BJ (cell line): ENCODE measurements at regions of chr6 and their contacts with region 1.

Region 1: DNA sequence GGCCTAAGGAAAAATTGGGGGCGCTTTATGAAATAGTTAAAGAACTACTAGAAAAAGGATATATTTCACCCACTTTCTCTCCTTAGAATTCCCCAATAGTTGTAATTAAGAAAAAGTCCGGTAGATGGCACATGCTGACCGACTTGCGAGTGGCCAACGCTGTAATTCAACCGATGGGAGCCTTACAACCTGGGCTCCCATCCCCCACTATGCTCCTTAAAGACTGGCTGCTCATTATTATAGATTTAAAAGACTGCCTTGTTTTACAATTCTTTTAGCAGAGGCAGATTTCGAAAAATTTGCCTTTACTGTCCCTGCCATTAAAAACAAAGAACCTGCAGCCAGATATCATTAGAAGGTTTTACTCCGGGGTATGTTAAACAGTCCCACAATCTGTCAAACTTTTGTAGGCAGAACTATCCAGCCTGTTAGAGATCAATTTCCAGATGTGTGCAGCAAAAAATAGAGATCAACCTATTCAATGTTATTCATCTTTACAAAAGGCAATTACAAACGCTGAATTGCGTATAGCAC is 58.5 kb upstream of the PRSS16 start:
- DNase-seq: peak; percentile 31
- H3K4me3 ChIP-seq: peak overlapping the region; percentile 56
- H3K27me3 ChIP-seq: no peaks in the 10 kb centered on the region
- CTCF ChIP-seq: peak; percentile 61

Region 2: GRCh38 chr6:27177485-27178406 is 11.2 kb before region 1 on chr6:
- CTCF ChIA-PET with region 1: interaction called, 10 read pairs
- POLR2A ChIA-PET with region 1: interaction called, 3 read pairs
- DNase-seq: peak; percentile 71
- H3K4me3 ChIP-seq: peak overlapping the region; percentile 71
- H3K27me3 ChIP-seq: no peaks in the 10 kb centered on the region
- CTCF ChIP-seq: peak; percentile 57

Region 3: GRCh38 chr6:28005124-28005890 is 816.4 kb after region 1 on chr6:
- CTCF ChIA-PET with region 1: no interaction called
- POLR2A ChIA-PET with region 1: no interaction called
- DNase-seq: no peak
- H3K4me3 ChIP-seq: no peak overlapping the region
- H3K27me3 ChIP-seq: no peaks in the 10 kb centered on the region
- CTCF ChIP-seq: no peak